Activated CD4-positive, alpha-beta T cell treated with anti-CD3 and anti-CD28 coated beads for 36 hours (primary cell): ENCODE measurements at regions of chr14 and their contacts with region 1.

Region 1: GRCh38 chr14:21383848-21384493 is at the start of gene SUPT16H:
- DNase-seq: peak; percentile 97
- ATAC-seq: peak; percentile 90
- H3K4me3 Mint-ChIP-seq: peak within 1 kb of the TSS; percentile 98
- H3K27ac Mint-ChIP-seq: peak within 1 kb of the TSS; percentile 98
- H3K4me1 Mint-ChIP-seq: peaks cover 36% of the 10 kb centered on the region
- H3K27me3 Mint-ChIP-seq: no peaks in the 10 kb centered on the region
- total RNA-seq, gene SUPT16H: 177 to 179 TPM

Region 2: DNA sequence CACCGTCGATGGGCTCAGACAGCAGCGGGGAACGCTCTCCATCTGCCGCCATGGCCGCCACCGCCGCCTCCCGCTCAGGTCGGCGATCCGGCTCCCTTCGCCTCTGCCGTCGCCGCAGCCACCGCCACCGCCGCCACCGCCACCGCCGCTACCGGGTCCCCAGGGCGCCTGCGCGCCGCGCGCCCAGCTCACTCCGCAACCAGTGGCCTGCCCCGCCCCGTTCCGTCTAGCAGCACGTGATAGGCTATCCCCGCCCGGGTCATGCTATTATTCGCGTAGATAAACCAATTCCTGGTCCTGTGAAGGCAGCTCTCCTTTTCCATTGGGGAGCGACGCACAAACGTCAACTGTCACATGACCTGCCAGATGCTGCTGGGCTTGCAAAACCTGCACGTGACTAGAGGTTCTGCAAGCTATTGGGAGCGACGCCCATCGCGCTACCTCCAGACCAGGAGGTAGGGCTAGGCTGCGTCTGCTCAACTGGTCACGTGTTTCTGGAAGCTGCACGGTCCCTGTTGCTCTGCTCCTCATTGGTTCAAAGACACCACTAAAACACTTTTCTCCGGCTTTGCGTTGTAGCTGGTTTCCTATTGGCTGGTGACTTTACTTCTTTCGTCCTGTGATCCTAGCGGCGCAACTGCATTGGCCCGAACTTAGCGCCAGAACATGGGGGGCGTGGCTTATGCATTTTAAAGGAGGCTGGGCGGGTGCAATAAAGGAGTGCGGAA is 922.5 kb before region 1 on chr14 and contains the start of gene PIP4P1:
- CTCF ChIA-PET with region 1: no interaction called
- POLR2A ChIA-PET with region 1: no interaction called
- intact Hi-C with region 1: loop called in 1 of 2 experiments (anchors 5 kb)
- DNase-seq: peak; percentile 99
- ATAC-seq: peak; percentile 95
- H3K4me3 Mint-ChIP-seq: peak within 1 kb of the TSS; percentile 84
- H3K27ac Mint-ChIP-seq: peak within 1 kb of the TSS; percentile 96
- H3K4me1 Mint-ChIP-seq: peaks cover 26% of the 10 kb centered on the region
- H3K27me3 Mint-ChIP-seq: no peaks in the 10 kb centered on the region
- total RNA-seq, gene PIP4P1: 24.2 to 24.7 TPM

Region 3: DNA sequence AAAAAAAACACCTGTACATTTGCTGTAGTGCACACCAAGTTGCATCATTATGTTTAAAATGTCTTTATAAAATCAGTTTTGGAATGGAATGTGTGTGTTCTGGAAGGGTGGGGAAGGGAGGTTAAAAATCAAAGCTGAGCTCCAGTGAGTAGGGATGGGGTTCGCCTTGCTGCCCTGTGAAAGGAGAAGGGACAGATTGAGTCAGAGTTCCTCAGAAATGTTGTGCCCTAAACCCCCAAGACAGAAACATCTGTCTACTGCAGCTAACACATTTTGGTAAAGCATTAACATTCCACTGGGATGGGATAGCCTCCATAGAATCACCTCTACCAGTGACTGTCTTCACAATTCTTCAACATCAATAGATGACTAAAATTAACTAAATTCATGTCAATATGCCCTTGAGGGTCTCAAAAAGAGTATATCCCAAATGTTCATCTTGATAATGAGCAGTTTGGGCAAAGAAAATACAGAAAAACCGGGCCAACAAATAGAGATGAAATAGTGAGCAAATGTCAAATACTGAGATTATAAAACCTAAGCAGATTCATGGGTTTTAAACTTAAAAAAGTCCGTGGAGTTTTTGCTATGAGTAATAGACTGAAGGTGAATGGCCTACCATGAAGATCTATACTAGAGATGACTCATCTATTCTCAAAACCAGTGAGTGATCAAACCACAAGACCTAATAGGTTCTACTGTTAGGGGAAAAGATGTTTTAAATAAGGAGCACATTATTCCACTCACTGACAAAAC is 120.1 kb before region 1 on chr14:
- CTCF ChIA-PET with region 1: interaction called, 6 read pairs
- POLR2A ChIA-PET with region 1: interaction called, 6 read pairs
- intact Hi-C with region 1: loop called (anchors 1 kb)
- DNase-seq: no peak
- ATAC-seq: peak; percentile 67
- H3K4me3 Mint-ChIP-seq: peak overlapping the region; percentile 93
- H3K27ac Mint-ChIP-seq: peak overlapping the region; percentile 96
- H3K4me1 Mint-ChIP-seq: peaks cover 67% of the 10 kb centered on the region
- H3K27me3 Mint-ChIP-seq: no peaks in the 10 kb centered on the region

Region 4: GRCh38 chr14:21308479-21309237 is 75.3 kb before region 1 on chr14:
- CTCF ChIA-PET with region 1: no interaction called
- POLR2A ChIA-PET with region 1: no interaction called
- intact Hi-C with region 1: loop called (anchors 1 to 2 kb)
- DNase-seq: peak; percentile 88
- ATAC-seq: peak; percentile 93
- H3K4me3 Mint-ChIP-seq: peak overlapping the region; percentile 73
- H3K27ac Mint-ChIP-seq: peak overlapping the region; percentile 92
- H3K4me1 Mint-ChIP-seq: peaks cover 22% of the 10 kb centered on the region
- H3K27me3 Mint-ChIP-seq: no peaks in the 10 kb centered on the region

Region 5: GRCh38 chr14:21414137-21414631 is 30.2 kb after region 1 on chr14:
- CTCF ChIA-PET with region 1: interaction called, 3 read pairs
- POLR2A ChIA-PET with region 1: no interaction called
- intact Hi-C with region 1: loop called in 1 of 2 experiments (anchors 1 kb)
- DNase-seq: no peak
- ATAC-seq: peak; percentile 91
- H3K4me3 Mint-ChIP-seq: no peak overlapping the region
- H3K27ac Mint-ChIP-seq: peak overlapping the region; percentile 88
- H3K4me1 Mint-ChIP-seq: peaks cover 26% of the 10 kb centered on the region
- H3K27me3 Mint-ChIP-seq: no peaks in the 10 kb centered on the region

Region 6: GRCh38 chr14:21455911-21456667 is 72.1 kb after region 1 on chr14 and contains the start of gene CHD8:
- CTCF ChIA-PET with region 1: interaction called, 4 read pairs
- POLR2A ChIA-PET with region 1: interaction called, 7 read pairs
- intact Hi-C with region 1: loop called (anchors 1 kb)
- DNase-seq: peak; percentile 100
- ATAC-seq: peak; percentile 99
- H3K4me3 Mint-ChIP-seq: peak within 1 kb of the TSS; percentile 97
- H3K27ac Mint-ChIP-seq: peak within 1 kb of the TSS; percentile 99
- H3K4me1 Mint-ChIP-seq: peaks cover 30% of the 10 kb centered on the region
- H3K27me3 Mint-ChIP-seq: no peaks in the 10 kb centered on the region
- total RNA-seq, gene CHD8: 84.3 to 104 TPM

Region 7: GRCh38 chr14:21510735-21511657 is 127.0 kb after region 1 on chr14 and contains the start of gene METTL3:
- CTCF ChIA-PET with region 1: interaction called, 3 read pairs
- POLR2A ChIA-PET with region 1: no interaction called
- intact Hi-C with region 1: loop called (anchors 1 kb)
- DNase-seq: peak; percentile 96
- ATAC-seq: peak; percentile 99
- H3K4me3 Mint-ChIP-seq: peak within 1 kb of the TSS; percentile 97
- H3K27ac Mint-ChIP-seq: peak within 1 kb of the TSS; percentile 96
- H3K4me1 Mint-ChIP-seq: peaks cover 42% of the 10 kb centered on the region
- H3K27me3 Mint-ChIP-seq: no peaks in the 10 kb centered on the region
- total RNA-seq, gene METTL3: 64.0 to 67.4 TPM

Region 8: GRCh38 chr14:21894003-21894897 is 510.3 kb after region 1 on chr14:
- CTCF ChIA-PET with region 1: no interaction called
- POLR2A ChIA-PET with region 1: no interaction called
- intact Hi-C with region 1: no loop called
- DNase-seq: peak; percentile 77
- ATAC-seq: peak; percentile 87
- H3K4me3 Mint-ChIP-seq: peak overlapping the region; percentile 65
- H3K27ac Mint-ChIP-seq: peak overlapping the region; percentile 85
- H3K4me1 Mint-ChIP-seq: peaks cover 11% of the 10 kb centered on the region
- H3K27me3 Mint-ChIP-seq: no peaks in the 10 kb centered on the region